ENCODE measurements at regions of chr1 and their contacts with region 1.

Region 1: DNA sequence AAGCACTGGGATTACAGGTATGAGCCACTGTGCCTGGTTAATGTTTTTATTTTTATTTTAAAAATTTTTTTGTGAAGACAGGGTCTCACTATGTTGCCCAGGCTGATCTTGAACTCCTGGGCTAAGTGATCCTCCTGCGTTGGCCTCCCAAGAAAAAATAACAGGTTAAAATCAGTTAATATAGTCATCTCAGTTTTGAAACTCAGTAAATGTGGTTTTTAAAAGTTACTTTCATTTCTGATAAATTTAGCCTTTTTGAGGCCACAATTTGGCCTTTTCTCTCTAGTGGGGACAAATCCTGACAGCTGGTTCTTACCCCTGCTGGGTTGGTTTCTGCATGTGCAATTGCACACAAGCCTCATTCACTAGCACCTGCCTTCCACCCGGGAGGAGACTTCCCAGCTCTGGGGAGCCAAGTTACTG is 13.3 kb downstream of the PMF1 start:
- DNase-seq: no peak
- ATAC-seq: no peak
- H3K4me3 ChIP-seq: no peak overlapping the region
- H3K4me3 Mint-ChIP-seq: peak overlapping the region in 1 of 10 donors; percentile 11
- H3K27ac ChIP-seq: no peak overlapping the region
- H3K27ac Mint-ChIP-seq: peak overlapping the region in 2 of 9 donors; percentile 67 to 76
- H3K4me1 ChIP-seq: no peaks in the 10 kb centered on the region
- H3K4me1 Mint-ChIP-seq: peaks cover 11 to 44% (median 18%) of the 10 kb centered on the region in 7 donors
- H3K27me3 ChIP-seq: no peaks in the 10 kb centered on the region
- H3K27me3 Mint-ChIP-seq: no peaks in the 10 kb centered on the region

Region 2: GRCh38 chr1:156090822-156091188 is 135.3 kb before region 1 on chr1:
- CTCF ChIA-PET with region 1: interaction called, 11 read pairs
- POLR2A ChIA-PET with region 1: interaction called, 3 read pairs
- intact Hi-C with region 1: loop called (anchors 1 to 2 kb)
- DNase-seq: peak; percentile 69 to 86 (median 82)
- ATAC-seq: peak; percentile 97
- H3K4me3 ChIP-seq: no peak overlapping the region
- H3K4me3 Mint-ChIP-seq: no peak overlapping the region
- H3K27ac ChIP-seq: no peak overlapping the region
- H3K27ac Mint-ChIP-seq: peak overlapping the region in 5 of 9 donors; percentile 3 to 76 (median 40)
- H3K4me1 ChIP-seq: peaks cover 2 to 4% of the 10 kb centered on the region in 2 donors
- H3K4me1 Mint-ChIP-seq: peaks cover 5 to 13% (median 9%) of the 10 kb centered on the region in 7 donors
- H3K27me3 ChIP-seq: no peaks in the 10 kb centered on the region
- H3K27me3 Mint-ChIP-seq: peaks cover 5 to 57% (median 19%) of the 10 kb centered on the region in 5 donors

Region 3: GRCh38 chr1:156140879-156141252 is 85.3 kb before region 1 on chr1:
- CTCF ChIA-PET with region 1: interaction called, 127 read pairs
- POLR2A ChIA-PET with region 1: interaction called, 6 read pairs
- intact Hi-C with region 1: loop called (anchors 1 kb)
- DNase-seq: no peak
- ATAC-seq: no peak
- H3K4me3 ChIP-seq: no peak overlapping the region
- H3K4me3 Mint-ChIP-seq: no peak overlapping the region
- H3K27ac ChIP-seq: no peak overlapping the region
- H3K27ac Mint-ChIP-seq: peak overlapping the region in 1 of 9 donors; percentile 83
- H3K4me1 ChIP-seq: no peaks in the 10 kb centered on the region
- H3K4me1 Mint-ChIP-seq: peaks cover 1 to 4% (median 2%) of the 10 kb centered on the region in 7 donors
- H3K27me3 ChIP-seq: no peaks in the 10 kb centered on the region
- H3K27me3 Mint-ChIP-seq: peaks cover 0 to 3% (median 0%) of the 10 kb centered on the region in 5 donors

Region 4: DNA sequence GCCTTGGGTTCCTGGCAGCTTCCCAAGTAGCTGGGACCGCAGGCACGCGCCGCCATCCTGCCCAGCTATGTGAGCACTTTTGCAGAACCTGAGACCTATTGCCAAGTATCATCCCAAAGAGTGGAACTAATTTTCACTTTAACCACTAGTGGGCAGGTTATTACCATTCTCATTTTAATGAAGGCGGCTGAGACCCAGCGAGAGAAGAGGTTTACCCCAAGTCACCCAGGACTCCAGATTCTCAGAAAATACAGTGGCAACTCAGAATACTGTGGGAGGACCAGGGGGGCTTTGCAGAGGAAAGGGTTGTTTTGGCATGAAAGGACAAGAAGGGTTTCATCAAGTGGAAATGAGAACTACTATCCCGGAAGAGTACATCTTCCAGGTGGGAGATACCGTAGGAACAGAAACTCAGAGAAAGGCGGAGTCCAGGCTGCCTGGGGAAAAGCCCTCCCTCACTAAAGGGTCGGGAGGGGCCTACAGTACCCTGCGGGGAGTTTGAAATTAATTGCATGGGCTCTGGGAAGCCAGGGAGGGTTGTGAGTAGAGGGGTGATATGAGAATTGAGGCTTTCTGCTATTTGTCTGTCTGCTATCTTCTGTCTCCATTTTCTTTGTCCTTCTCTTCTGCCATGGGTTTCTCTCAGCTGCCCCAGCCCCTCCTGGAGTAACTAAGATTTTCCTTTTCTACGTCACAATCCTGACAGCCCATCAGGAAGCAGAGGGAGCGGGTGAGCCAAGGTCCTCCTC is 79.9 kb before region 1 on chr1:
- CTCF ChIA-PET with region 1: interaction called, 127 read pairs
- POLR2A ChIA-PET with region 1: interaction called, 6 read pairs
- intact Hi-C with region 1: loop called (anchors 1 kb)
- DNase-seq: peak in 7 of 9 donors; percentile 54 to 78 (median 71)
- ATAC-seq: peak; percentile 63
- H3K4me3 ChIP-seq: no peak overlapping the region
- H3K4me3 Mint-ChIP-seq: peak overlapping the region; percentile 34 to 79 (median 63)
- H3K27ac ChIP-seq: no peak overlapping the region
- H3K27ac Mint-ChIP-seq: peak overlapping the region in 7 of 9 donors; percentile 9 to 84 (median 63)
- H3K4me1 ChIP-seq: peaks cover 0 to 6% of the 10 kb centered on the region in 2 donors
- H3K4me1 Mint-ChIP-seq: peaks cover 6 to 28% (median 15%) of the 10 kb centered on the region in 7 donors
- H3K27me3 ChIP-seq: no peaks in the 10 kb centered on the region
- H3K27me3 Mint-ChIP-seq: peaks cover 0 to 8% (median 0%) of the 10 kb centered on the region in 5 donors

Region 5: DNA sequence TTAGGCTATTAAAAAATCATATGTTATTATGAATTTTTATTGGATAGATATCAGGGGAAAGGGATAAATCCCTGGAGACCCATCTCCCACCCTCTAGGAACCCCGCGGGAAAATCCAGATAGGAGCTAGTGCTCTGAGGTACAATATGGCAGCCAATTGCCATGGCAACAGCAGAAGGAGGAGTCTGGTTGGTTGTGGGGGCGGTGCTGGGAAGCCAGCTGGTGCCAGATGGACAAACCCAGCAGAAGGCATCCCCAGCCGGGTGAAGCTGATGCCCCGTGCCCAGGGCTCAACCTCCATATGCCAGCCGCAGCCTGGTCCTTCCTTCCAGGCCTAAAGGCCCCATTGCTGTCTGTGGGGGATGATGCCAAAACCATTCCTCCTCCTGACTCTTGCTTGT is 181.2 kb after region 1 on chr1:
- CTCF ChIA-PET with region 1: no interaction called
- POLR2A ChIA-PET with region 1: no interaction called
- intact Hi-C with region 1: no loop called
- DNase-seq: no peak
- ATAC-seq: no peak
- H3K4me3 ChIP-seq: no peak overlapping the region
- H3K4me3 Mint-ChIP-seq: no peak overlapping the region
- H3K27ac ChIP-seq: no peak overlapping the region
- H3K27ac Mint-ChIP-seq: no peak overlapping the region
- H3K4me1 ChIP-seq: no peaks in the 10 kb centered on the region
- H3K4me1 Mint-ChIP-seq: no peaks in the 10 kb centered on the region
- H3K27me3 ChIP-seq: no peaks in the 10 kb centered on the region
- H3K27me3 Mint-ChIP-seq: peaks cover 41 to 65% (median 51%) of the 10 kb centered on the region in 5 donors

Measured in naive thymus-derived CD4-positive, alpha-beta T cell (primary cell).